GM12878 (cell line): ENCODE measurements at regions of chr6 and their contacts with region 1.

Region 1: GRCh38 chr6:14075095-14075503 is 42.5 kb upstream of the CD83 start:
- DNase-seq: no peak
- ATAC-seq: peak; percentile 79
- H3K4me3 ChIP-seq: peak overlapping the region; percentile 60
- H3K27ac ChIP-seq: peak overlapping the region; percentile 97
- H3K4me1 ChIP-seq: peaks cover 25% of the 10 kb centered on the region
- H3K27me3 ChIP-seq: no peaks in the 10 kb centered on the region
- CTCF ChIP-seq: no peak
- EP300 ChIP-seq: no peak; a peak in 1 of 4 replicates
- POLR2A ChIP-seq: peak; percentile 24; the same call in 1 of the 2 replicates
- RAD21 ChIP-seq: no peak

Region 2: DNA sequence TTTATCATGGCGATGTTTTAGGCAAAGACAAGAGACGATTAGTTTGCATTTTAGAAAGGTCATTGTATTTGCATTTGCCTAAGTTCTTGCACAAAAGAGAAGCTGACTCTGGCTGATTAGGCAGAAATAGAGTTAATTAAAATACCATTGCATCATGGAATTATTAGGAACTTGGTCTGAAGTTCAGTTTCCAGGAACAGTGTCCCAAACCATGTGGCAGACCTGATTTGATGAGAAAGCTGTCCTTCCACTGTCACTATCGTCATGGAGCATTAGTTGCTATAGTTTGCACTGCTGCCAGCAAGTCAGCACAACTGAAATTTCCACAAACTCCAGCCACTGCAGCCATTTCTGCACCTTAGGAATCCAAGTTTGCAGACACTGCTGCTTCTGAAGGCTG is 236.5 kb before region 1 on chr6:
- CTCF ChIA-PET with region 1: no interaction called
- POLR2A ChIA-PET with region 1: no interaction called
- RAD21 ChIA-PET with region 1: no interaction called
- SMC1A ChIA-PET with region 1: no interaction called
- in situ Hi-C with region 1: no loop called
- intact Hi-C with region 1: no loop called
- DNase-seq: no peak
- ATAC-seq: no peak
- H3K4me3 ChIP-seq: no peak overlapping the region
- H3K27ac ChIP-seq: no peak overlapping the region
- H3K4me1 ChIP-seq: no peaks in the 10 kb centered on the region
- H3K27me3 ChIP-seq: no peaks in the 10 kb centered on the region
- CTCF ChIP-seq: no peak
- EP300 ChIP-seq: no peak
- POLR2A ChIP-seq: no peak
- RAD21 ChIP-seq: no peak

Region 3: GRCh38 chr6:14095437-14095836 is 20.3 kb after region 1 on chr6:
- CTCF ChIA-PET with region 1: interaction called, 28 read pairs
- POLR2A ChIA-PET with region 1: interaction called, 13 read pairs
- RAD21 ChIA-PET with region 1: interaction called, 23 read pairs
- SMC1A ChIA-PET with region 1: interaction called, 226 read pairs
- in situ Hi-C with region 1: no loop called
- intact Hi-C with region 1: loop called (anchors 1 kb)
- DNase-seq: no peak
- ATAC-seq: peak; percentile 79
- H3K4me3 ChIP-seq: no peak overlapping the region
- H3K27ac ChIP-seq: peak overlapping the region; percentile 80; the same call in 1 of the 2 replicates
- H3K4me1 ChIP-seq: peaks cover 56% of the 10 kb centered on the region
- H3K27me3 ChIP-seq: no peaks in the 10 kb centered on the region
- CTCF ChIP-seq: no peak
- EP300 ChIP-seq: peak; percentile 87 to 91; a peak in 3 of 4 replicates
- POLR2A ChIP-seq: no peak
- RAD21 ChIP-seq: no peak

Region 4: GRCh38 chr6:14117158-14118090 is 42.3 kb after region 1 on chr6 and contains the start of gene CD83:
- CTCF ChIA-PET with region 1: interaction called, 3 read pairs
- POLR2A ChIA-PET with region 1: interaction called, 13 read pairs
- RAD21 ChIA-PET with region 1: interaction called, 19 read pairs
- SMC1A ChIA-PET with region 1: interaction called, 66 read pairs
- in situ Hi-C with region 1: no loop called
- intact Hi-C with region 1: loop called (anchors 2 kb)
- DNase-seq: no peak
- ATAC-seq: peak; percentile 68
- H3K4me3 ChIP-seq: peak within 1 kb of the TSS; percentile 93
- H3K27ac ChIP-seq: peak within 1 kb of the TSS; percentile 78
- H3K4me1 ChIP-seq: peaks cover 14% of the 10 kb centered on the region
- H3K27me3 ChIP-seq: no peaks in the 10 kb centered on the region
- CTCF ChIP-seq: peak in 2 of 3 experiments; percentile 11 to 34; a peak in 2 of 6 replicates
- EP300 ChIP-seq: peak in 1 of 2 experiments; percentile 42; a peak in 1 of 4 replicates
- POLR2A ChIP-seq: peak; percentile 100
- RAD21 ChIP-seq: peak; percentile 35
- polyA plus RNA-seq, gene CD83: 120 to 174 TPM

Region 5: DNA sequence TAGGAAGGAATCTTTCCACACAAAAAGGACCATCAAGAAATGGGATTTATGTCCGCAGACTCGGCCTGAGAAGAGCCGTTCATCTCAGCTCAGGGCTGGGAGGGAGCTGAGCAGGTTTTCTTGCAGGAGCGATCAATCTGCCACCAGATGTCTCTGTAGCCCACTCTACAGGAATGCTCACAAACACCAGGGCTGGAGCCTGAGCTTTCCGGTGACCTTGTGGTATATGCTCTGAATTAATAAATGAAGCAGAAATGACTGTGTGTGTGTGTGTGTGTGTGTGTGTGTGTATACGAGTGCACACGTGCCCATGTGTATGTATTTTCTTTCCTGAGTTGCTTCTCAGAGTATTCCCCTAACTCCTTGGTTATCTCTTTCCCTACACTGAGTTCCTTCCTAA is 54.5 kb after region 1 on chr6:
- CTCF ChIA-PET with region 1: interaction called, 33 read pairs
- POLR2A ChIA-PET with region 1: interaction called, 13 read pairs
- RAD21 ChIA-PET with region 1: interaction called, 19 read pairs
- SMC1A ChIA-PET with region 1: interaction called, 33 read pairs
- in situ Hi-C with region 1: no loop called
- intact Hi-C with region 1: no loop called
- DNase-seq: no peak
- ATAC-seq: peak; percentile 47
- H3K4me3 ChIP-seq: no peak overlapping the region
- H3K27ac ChIP-seq: no peak overlapping the region
- H3K4me1 ChIP-seq: peaks cover 6% of the 10 kb centered on the region
- H3K27me3 ChIP-seq: no peaks in the 10 kb centered on the region
- CTCF ChIP-seq: peak; percentile 41 to 72 (median 56)
- EP300 ChIP-seq: no peak
- POLR2A ChIP-seq: no peak
- RAD21 ChIP-seq: peak; percentile 67